ENCODE measurements at regions of chr17 and their contacts with region 1.

Region 1: DNA sequence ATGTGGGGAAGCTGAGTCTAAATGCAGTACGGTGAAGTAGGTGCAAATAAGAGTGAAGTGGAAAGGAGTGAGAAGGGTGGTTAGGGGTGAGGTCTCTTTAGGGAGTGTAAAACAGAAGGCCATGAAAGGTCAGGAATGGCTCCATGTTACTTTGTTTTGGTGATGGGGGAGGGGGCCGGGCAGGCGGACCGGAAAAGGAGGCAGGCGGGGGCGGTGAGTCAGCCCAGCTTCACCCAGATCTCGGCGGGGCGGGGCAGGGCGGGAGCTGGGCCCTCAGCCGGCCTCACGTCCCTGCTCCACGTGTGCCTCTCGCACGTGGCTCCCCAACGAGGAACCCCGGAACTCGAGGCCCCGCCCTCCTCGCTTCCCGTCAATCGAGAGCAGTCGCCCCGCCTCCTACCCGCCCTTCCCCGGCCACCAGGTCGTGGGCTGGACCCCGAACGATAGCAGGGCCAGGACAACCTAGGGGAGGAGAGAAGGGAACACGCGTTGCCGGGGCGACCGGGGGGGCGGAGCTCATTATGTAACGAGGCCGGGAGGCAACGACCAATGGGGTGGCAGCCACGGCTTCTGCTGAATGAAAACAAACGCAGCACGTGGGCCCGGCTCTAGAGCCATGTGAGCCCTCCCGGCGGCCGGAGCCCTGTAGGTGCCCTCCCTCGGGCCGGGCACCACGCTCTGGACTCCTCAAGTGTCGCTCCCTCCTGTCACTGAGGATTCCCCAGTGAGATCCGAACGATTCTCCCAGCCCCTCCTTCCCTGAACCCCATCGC is 1.4 kb downstream of the NR1D1 start:
- DNase-seq: peak; percentile 94
- H3K4me3 ChIP-seq: peak overlapping the region; percentile 87
- CTCF ChIP-seq: no peak

Region 2: DNA sequence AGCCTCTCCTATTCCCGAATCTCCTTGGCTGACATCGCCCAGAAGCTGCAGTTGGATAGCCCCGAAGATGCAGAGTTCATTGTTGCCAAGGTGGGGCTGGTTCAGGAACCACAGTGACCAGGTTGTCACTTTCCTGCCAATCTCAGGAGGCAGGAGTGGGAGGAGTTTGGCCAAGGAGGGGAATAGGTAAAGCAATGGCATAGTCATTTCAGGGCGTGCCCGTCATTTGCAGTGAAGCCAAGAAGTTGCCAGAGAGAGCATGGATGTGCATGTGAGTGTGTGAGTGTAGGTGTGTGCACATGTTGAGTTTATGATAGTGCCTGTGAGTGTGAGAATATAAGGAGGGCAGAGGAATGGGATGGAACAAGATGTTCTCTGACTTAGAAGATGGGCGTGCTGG is 103.6 kb before region 1 on chr17:
- CTCF ChIA-PET with region 1: no interaction called
- POLR2A ChIA-PET with region 1: no interaction called
- DNase-seq: no peak
- H3K4me3 ChIP-seq: no peak overlapping the region
- CTCF ChIP-seq: no peak

Region 3: DNA sequence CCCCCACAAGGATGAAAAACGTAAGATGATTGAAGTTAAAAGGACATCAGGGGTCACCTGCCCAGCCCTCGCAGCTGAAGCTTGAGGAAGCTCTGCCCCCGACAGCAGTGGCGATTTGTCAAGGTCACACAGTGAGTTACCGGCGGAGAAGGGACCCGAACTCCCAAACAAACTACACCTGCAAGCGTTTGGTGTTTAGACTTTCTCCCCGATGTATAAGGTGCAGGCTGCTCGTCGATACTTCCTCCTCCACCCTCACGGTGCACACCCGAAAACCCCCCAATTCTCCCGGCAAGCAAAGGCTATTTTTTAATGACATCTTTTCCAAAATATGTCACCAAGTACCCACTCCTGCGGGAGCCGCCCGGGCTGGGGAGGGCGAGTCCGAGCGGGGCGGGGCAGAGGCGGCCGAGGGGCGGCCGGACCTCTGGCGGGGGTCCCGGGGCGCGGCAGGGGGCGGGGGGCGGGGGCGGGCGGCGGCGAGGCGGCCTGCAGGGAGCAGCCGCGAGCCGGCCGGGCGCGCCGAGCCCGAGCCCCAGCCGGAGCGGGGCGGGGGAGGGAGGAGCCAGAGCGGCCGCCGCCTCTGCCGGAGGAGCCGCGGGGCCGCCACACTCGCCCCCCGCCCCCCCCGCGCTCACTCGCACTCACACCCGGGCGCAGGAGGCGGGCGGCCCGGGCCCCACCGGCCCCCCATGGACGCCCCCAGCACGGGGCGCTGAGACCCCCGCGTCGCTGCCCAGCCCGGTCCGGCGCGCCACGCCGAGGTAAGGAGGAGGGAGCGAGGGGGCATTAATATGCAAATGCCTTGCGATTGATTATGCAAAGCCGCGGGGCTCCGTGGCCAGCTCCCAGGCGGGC is 36.5 kb before region 1 on chr17 and contains the start of gene THRA:
- CTCF ChIA-PET with region 1: interaction called, 7 read pairs
- POLR2A ChIA-PET with region 1: interaction called, 12 read pairs
- DNase-seq: no peak
- H3K4me3 ChIP-seq: peak within 1 kb of the TSS; percentile 90
- CTCF ChIP-seq: no peak

Region 4: GRCh38 chr17:40121181-40122135 is 22.4 kb after region 1 on chr17 and contains the start of gene MSL1:
- CTCF ChIA-PET with region 1: interaction called, 4 read pairs
- POLR2A ChIA-PET with region 1: interaction called, 11 read pairs
- DNase-seq: no peak
- H3K4me3 ChIP-seq: peak within 1 kb of the TSS; percentile 92
- CTCF ChIP-seq: no peak

Region 5: DNA sequence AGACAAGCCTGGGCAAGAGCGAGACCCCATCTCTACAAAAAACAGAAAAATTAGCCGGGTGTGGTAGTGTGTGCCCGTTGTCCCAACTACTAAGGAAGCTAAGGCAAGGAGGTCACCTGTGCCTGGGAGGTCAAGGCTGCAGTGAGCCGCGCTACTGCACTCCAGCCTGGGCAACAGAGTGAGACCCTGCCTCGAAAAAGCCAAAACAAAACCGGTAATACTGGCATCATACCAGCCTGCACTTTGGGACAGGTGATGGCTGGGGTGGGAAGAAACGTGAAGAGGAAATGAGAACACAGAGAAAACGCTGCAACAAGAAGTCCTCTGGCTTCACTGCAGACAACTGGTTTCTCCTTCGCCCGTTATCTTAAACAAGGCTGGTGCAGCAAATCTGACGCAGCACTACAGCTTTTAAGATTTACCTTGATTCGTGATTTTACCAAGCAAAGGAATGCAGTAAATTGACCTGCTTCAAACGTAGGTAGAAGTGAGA is 40.6 kb after region 1 on chr17:
- CTCF ChIA-PET with region 1: no interaction called
- POLR2A ChIA-PET with region 1: interaction called, 10 read pairs
- DNase-seq: no peak
- H3K4me3 ChIP-seq: peak overlapping the region; percentile 57
- CTCF ChIP-seq: no peak